T-cell (primary cell): ENCODE measurements at regions of chr3 and their contacts with region 1.

Region 1: GRCh38 chr3:44825264-44825925 is 36.3 kb upstream of the TMEM42 start:
- DNase-seq: no peak
- ATAC-seq: no peak
- H3K4me3 ChIP-seq: no peak overlapping the region
- H3K4me3 Mint-ChIP-seq: no peak overlapping the region
- H3K27ac ChIP-seq: no peak overlapping the region
- H3K27ac Mint-ChIP-seq: no peak overlapping the region
- H3K4me1 ChIP-seq: no peaks in the 10 kb centered on the region
- H3K4me1 Mint-ChIP-seq: no peaks in the 10 kb centered on the region
- H3K27me3 ChIP-seq: no peaks in the 10 kb centered on the region
- H3K27me3 Mint-ChIP-seq: no peaks in the 10 kb centered on the region

Region 2: GRCh38 chr3:44674211-44674610 is 151.2 kb before region 1 on chr3:
- CTCF ChIA-PET with region 1: no interaction called
- POLR2A ChIA-PET with region 1: no interaction called
- DNase-seq: no peak
- ATAC-seq: no peak
- H3K4me3 ChIP-seq: no peak overlapping the region
- H3K4me3 Mint-ChIP-seq: no peak overlapping the region
- H3K27ac ChIP-seq: no peak overlapping the region
- H3K27ac Mint-ChIP-seq: no peak overlapping the region
- H3K4me1 ChIP-seq: no peaks in the 10 kb centered on the region
- H3K4me1 Mint-ChIP-seq: no peaks in the 10 kb centered on the region
- H3K27me3 ChIP-seq: peaks cover 0 to 10% of the 10 kb centered on the region in 2 experiments
- H3K27me3 Mint-ChIP-seq: peaks cover 3% of the 10 kb centered on the region in 2 donors

Region 3: GRCh38 chr3:44966750-44967278 is 141.4 kb after region 1 on chr3:
- CTCF ChIA-PET with region 1: no interaction called
- POLR2A ChIA-PET with region 1: no interaction called
- DNase-seq: no peak
- ATAC-seq: peak in 1 of 4 experiments; percentile 36
- H3K4me3 ChIP-seq: no peak overlapping the region
- H3K4me3 Mint-ChIP-seq: no peak overlapping the region
- H3K27ac ChIP-seq: no peak overlapping the region
- H3K27ac Mint-ChIP-seq: peak overlapping the region in 1 of 2 donors; percentile 3
- H3K4me1 ChIP-seq: peaks cover 31 to 56% of the 10 kb centered on the region in 2 experiments
- H3K4me1 Mint-ChIP-seq: peaks cover 89 to 94% (median 92%) of the 10 kb centered on the region in 3 donors
- H3K27me3 ChIP-seq: no peaks in the 10 kb centered on the region
- H3K27me3 Mint-ChIP-seq: no peaks in the 10 kb centered on the region

Region 4: GRCh38 chr3:46163318-46164041 is 1338.1 kb after region 1 on chr3:
- CTCF ChIA-PET with region 1: no interaction called
- POLR2A ChIA-PET with region 1: interaction called in 1 of 2 experiments, 12 read pairs
- DNase-seq: no peak
- ATAC-seq: no peak
- H3K4me3 ChIP-seq: no peak overlapping the region
- H3K4me3 Mint-ChIP-seq: no peak overlapping the region
- H3K27ac ChIP-seq: no peak overlapping the region
- H3K27ac Mint-ChIP-seq: no peak overlapping the region
- H3K4me1 ChIP-seq: no peaks in the 10 kb centered on the region
- H3K4me1 Mint-ChIP-seq: no peaks in the 10 kb centered on the region
- H3K27me3 ChIP-seq: no peaks in the 10 kb centered on the region
- H3K27me3 Mint-ChIP-seq: no peaks in the 10 kb centered on the region